ENCODE measurements at regions of chr20 and their contacts with region 1.

Region 1: DNA sequence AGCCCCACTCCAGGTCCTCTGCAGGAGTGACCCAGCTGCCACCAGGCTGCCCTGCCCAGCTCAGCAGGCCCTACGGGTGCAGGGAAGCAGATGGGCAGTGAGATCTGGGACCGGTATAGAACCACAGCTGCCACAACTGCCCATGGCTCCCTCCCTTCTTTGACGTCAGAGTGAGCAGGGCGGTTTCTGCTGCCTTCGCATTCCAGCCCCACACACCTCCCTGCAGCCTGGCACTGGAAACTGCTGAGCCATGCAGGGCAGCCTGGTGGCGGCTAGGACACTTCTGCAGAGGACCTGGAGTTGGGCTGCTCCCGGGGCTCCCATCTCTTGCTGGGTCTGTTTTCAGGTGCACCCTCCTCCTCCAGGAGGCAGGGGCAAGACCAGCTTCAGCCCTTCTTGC is 101.6 kb upstream of the CD93 start:
- DNase-seq: no peak
- ATAC-seq: no peak
- H3K4me3 ChIP-seq: no peak overlapping the region
- H3K27ac ChIP-seq: no peak overlapping the region
- H3K4me1 ChIP-seq: no peaks in the 10 kb centered on the region
- H3K27me3 ChIP-seq: peaks cover 16% of the 10 kb centered on the region
- CTCF ChIP-seq: no peak
- POLR2A ChIP-seq: no peak
- RAD21 ChIP-seq: no peak

Region 2: DNA sequence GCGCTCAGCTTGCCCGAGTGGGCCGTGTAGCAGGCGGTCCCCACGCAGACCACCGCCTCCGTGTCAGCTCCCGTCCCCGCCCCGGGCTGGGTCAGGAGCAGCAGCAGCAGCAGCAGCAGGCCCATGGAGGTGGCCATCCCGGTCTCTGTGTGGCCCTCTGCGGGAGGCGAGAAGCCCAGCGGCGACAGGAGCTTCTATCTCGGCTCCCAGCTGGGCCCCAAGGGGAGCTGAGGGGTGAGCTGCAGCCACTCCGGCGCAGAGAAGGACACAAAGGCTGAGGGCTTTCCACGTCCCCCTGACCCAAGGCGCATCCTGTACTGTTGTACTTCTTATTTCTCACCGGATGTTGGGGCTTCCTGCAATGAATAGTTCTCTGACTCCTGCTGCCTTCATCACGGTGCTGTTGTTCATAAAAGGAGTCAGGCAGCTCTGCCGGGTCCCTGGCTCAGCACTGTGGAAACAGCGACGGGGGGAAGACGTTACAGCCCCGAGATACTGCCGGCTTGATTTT is 101.6 kb before region 1 on chr20 and contains the start of gene CD93:
- CTCF ChIA-PET with region 1: no interaction called
- POLR2A ChIA-PET with region 1: no interaction called
- dilution Hi-C with region 1: no loop called
- in situ Hi-C with region 1: loop called (anchors 25 kb)
- intact Hi-C with region 1: no loop called
- DNase-seq: peak; percentile 10
- ATAC-seq: no peak
- H3K4me3 ChIP-seq: no peak within 1 kb of the TSS
- H3K27ac ChIP-seq: no peak within 1 kb of the TSS
- H3K4me1 ChIP-seq: no peaks in the 10 kb centered on the region
- H3K27me3 ChIP-seq: peaks cover 31% of the 10 kb centered on the region
- CTCF ChIP-seq: no peak
- POLR2A ChIP-seq: no peak
- RAD21 ChIP-seq: no peak
- total RNA-seq, gene CD93: under 0.01 TPM in 1 of 2 replicates, not detected in the other